Activated naive CD4-positive, alpha-beta T cell treated with anti-CD3 and anti-CD28 coated beads, Interleukin-2, amount 10 ng/mL, durations not matched to agents 7 days and 5 days (primary cell): ENCODE measurements at regions of chr4 and their contacts with region 1.

Region 1: GRCh38 chr4:118076958-118077766 is 42.9 kb downstream of the NDST3 start:
- DNase-seq: peak; percentile 36
- H3K4me3 Mint-ChIP-seq: no peak overlapping the region
- H3K27ac Mint-ChIP-seq: no peak overlapping the region
- H3K4me1 Mint-ChIP-seq: no peaks in the 10 kb centered on the region
- H3K27me3 Mint-ChIP-seq: no peaks in the 10 kb centered on the region

Region 2: GRCh38 chr4:118058955-118059354 is 18.2 kb before region 1 on chr4:
- CTCF ChIA-PET with region 1: no interaction called
- DNase-seq: no peak
- H3K4me3 Mint-ChIP-seq: no peak overlapping the region
- H3K27ac Mint-ChIP-seq: no peak overlapping the region
- H3K4me1 Mint-ChIP-seq: no peaks in the 10 kb centered on the region
- H3K27me3 Mint-ChIP-seq: no peaks in the 10 kb centered on the region

Region 3: GRCh38 chr4:118224239-118224829 is 147.2 kb after region 1 on chr4:
- CTCF ChIA-PET with region 1: interaction called, 32 read pairs
- DNase-seq: no peak
- H3K4me3 Mint-ChIP-seq: no peak overlapping the region
- H3K27ac Mint-ChIP-seq: no peak overlapping the region
- H3K4me1 Mint-ChIP-seq: no peaks in the 10 kb centered on the region
- H3K27me3 Mint-ChIP-seq: peaks cover 4% of the 10 kb centered on the region